CD4-positive, alpha-beta memory T cell (primary cell): ENCODE measurements at regions of chr11 and their contacts with region 1.

Region 1: DNA sequence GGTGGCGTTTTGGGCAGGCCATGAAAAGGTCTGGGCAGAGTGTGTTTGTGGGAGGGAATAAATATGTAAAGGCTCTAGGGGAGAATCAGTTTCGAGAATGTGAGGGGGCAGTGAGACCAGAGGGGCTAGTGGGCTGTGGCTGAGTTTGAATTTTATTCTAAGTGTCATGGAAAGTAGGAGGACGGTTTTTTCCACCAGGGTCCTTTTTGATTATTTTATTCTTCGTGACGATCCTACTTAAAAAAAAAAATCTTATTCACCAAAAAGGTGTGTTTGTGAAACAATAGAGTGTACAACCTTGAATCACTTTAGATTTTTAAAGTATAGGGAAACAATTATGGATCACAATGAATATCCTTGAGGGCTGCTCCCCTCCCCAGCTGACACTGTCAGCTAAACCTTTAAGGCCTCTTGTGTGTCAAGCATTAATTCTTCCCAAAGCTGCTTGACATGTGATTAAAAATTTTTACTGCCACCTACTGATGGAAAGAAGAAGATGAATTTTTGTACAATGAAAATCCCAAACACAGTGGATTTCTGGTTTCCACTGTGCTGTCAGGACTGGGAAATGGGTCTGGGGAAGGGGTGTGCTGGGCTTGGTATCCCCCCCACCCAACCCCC is 107.5 kb upstream of the OR4B1 start:
- DNase-seq: peak; percentile 33 to 47 (median 40)
- H3K4me3 ChIP-seq: peak overlapping the region in 1 of 2 donors; percentile 54
- H3K4me3 Mint-ChIP-seq: peak overlapping the region; percentile 52 to 90 (median 80)
- H3K27ac ChIP-seq: peak overlapping the region; percentile 64
- H3K27ac Mint-ChIP-seq: peak overlapping the region; percentile 70 to 95 (median 88)
- H3K4me1 ChIP-seq: peaks cover 50% of the 10 kb centered on the region
- H3K4me1 Mint-ChIP-seq: peaks cover 36 to 53% (median 45%) of the 10 kb centered on the region in 4 donors
- H3K27me3 ChIP-seq: no peaks in the 10 kb centered on the region
- H3K27me3 Mint-ChIP-seq: no peaks in the 10 kb centered on the region

Region 2: GRCh38 chr11:47924184-47924691 is 184.9 kb before region 1 on chr11:
- CTCF ChIA-PET with region 1: interaction called, 487 read pairs
- POLR2A ChIA-PET with region 1: no interaction called
- intact Hi-C with region 1: no loop called
- DNase-seq: no peak
- H3K4me3 ChIP-seq: no peak overlapping the region
- H3K4me3 Mint-ChIP-seq: peak overlapping the region in 2 of 8 donors; percentile 36 to 51
- H3K27ac ChIP-seq: no peak overlapping the region
- H3K27ac Mint-ChIP-seq: peak overlapping the region in 3 of 7 donors; percentile 68 to 85 (median 73)
- H3K4me1 ChIP-seq: peaks cover 29% of the 10 kb centered on the region
- H3K4me1 Mint-ChIP-seq: peaks cover 28 to 42% (median 37%) of the 10 kb centered on the region in 4 donors
- H3K27me3 ChIP-seq: no peaks in the 10 kb centered on the region
- H3K27me3 Mint-ChIP-seq: no peaks in the 10 kb centered on the region

Region 3: DNA sequence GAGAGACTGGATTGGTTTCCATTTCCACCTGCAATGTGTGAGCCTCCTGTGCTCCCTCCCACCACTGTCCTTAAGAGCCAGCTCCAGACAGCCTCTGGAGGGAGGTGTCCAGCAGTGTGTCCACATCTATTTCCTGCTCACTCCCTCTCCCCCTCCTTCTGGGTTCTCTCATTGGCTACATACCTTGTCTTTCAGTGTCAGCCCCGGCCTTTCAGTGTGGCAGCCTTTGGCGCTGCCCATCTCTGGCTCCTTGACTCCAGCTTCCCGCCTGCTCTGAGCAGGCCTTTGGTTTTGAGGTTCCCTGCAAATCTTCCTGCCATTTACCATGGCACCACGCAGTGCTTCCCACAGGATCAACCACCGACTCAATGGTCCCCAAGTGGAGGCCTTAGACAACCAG is 147.8 kb before region 1 on chr11:
- CTCF ChIA-PET with region 1: interaction called, 83 read pairs
- POLR2A ChIA-PET with region 1: interaction called, 5 read pairs
- intact Hi-C with region 1: loop called (anchors 1 kb)
- DNase-seq: no peak
- H3K4me3 ChIP-seq: no peak overlapping the region
- H3K4me3 Mint-ChIP-seq: no peak overlapping the region
- H3K27ac ChIP-seq: no peak overlapping the region
- H3K27ac Mint-ChIP-seq: no peak overlapping the region
- H3K4me1 ChIP-seq: no peaks in the 10 kb centered on the region
- H3K4me1 Mint-ChIP-seq: no peaks in the 10 kb centered on the region
- H3K27me3 ChIP-seq: no peaks in the 10 kb centered on the region
- H3K27me3 Mint-ChIP-seq: no peaks in the 10 kb centered on the region

Region 4: DNA sequence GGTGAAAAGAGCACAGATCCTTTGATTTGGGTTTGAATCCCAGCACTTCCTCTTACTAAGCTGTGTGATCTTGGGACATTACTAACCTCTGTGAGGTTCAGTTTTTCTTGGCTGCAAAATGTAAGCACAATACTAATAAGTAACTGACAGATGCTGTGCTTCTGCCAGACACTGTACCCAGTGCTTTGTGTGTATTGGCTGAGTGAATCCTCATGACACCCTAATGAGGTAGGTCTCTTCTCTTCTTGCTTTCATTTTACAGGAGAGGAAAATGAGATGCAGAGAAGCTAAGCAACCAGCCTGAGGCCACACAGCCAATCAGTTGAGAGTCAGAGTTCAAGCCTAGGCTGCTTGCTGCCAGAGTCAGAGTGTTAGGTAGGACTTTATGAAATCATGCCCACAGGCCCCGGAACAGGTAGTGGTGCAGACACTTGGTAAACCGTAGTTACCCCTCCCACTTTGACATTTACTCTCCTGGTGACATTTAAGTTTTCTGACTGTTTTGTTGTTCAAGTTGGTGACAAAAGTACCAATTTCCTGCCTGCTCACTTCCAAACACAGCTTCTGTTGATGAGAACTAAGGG is 107.6 kb before region 1 on chr11:
- CTCF ChIA-PET with region 1: interaction called, 29 read pairs
- POLR2A ChIA-PET with region 1: interaction called, 11 read pairs
- intact Hi-C with region 1: loop called (anchors 1 kb)
- DNase-seq: peak; percentile 90 to 97 (median 95)
- H3K4me3 ChIP-seq: peak overlapping the region in 1 of 2 donors; percentile 14
- H3K4me3 Mint-ChIP-seq: peak overlapping the region; percentile 66 to 93 (median 76)
- H3K27ac ChIP-seq: peak overlapping the region; percentile 65
- H3K27ac Mint-ChIP-seq: peak overlapping the region; percentile 90 to 99 (median 97)
- H3K4me1 ChIP-seq: peaks cover 95% of the 10 kb centered on the region
- H3K4me1 Mint-ChIP-seq: peaks cover 61 to 93% (median 80%) of the 10 kb centered on the region in 4 donors
- H3K27me3 ChIP-seq: no peaks in the 10 kb centered on the region
- H3K27me3 Mint-ChIP-seq: no peaks in the 10 kb centered on the region

Region 5: DNA sequence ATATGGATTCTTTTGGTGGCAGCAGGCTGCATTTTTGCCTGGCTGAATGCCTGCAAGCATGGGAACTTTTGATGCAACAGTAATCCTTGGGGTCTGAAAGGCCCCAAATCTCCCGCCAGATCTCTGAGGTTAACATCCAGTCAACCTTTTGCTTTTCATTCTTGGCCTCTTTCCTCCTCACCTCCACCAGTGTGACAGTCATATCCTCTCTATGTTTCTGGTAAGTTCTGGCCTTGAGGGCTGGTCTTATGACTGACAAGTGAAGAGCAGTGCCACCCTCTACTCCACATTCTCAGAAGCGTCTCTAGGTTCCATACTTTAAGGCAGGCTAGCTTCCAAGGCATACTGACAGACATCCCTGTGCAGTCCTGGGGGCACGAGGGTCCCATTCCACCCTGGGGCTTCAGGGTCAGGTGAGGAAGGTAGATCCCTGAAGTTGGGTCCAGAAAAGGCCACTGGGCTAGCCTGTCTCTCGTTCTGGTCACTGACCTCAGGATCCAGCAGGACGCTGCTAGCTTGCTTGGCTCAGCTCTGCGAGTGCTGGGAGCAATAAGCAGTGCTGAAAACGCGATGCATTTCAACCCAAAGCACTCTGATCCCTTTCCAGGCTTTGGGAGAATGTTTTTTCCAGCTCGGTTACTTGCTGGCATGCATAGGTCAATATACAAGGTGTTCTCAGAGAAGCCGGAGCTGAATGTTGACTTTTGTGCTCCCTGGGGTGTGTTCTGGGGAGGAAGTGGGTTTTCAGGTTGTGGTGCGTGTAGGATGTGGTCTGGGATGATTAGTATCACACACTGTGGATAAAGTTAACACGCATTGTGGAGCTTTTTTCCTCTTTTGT is 53.6 kb before region 1 on chr11:
- CTCF ChIA-PET with region 1: interaction called, 83 read pairs
- POLR2A ChIA-PET with region 1: interaction called, 44 read pairs
- intact Hi-C with region 1: loop called (anchors 2 kb)
- DNase-seq: peak; percentile 77 to 84 (median 81)
- H3K4me3 ChIP-seq: peak overlapping the region; percentile 33 to 40
- H3K4me3 Mint-ChIP-seq: peak overlapping the region; percentile 71 to 88 (median 83)
- H3K27ac ChIP-seq: peak overlapping the region; percentile 31
- H3K27ac Mint-ChIP-seq: peak overlapping the region; percentile 79 to 96 (median 91)
- H3K4me1 ChIP-seq: peaks cover 89% of the 10 kb centered on the region
- H3K4me1 Mint-ChIP-seq: peaks cover 60 to 93% (median 75%) of the 10 kb centered on the region in 4 donors
- H3K27me3 ChIP-seq: no peaks in the 10 kb centered on the region
- H3K27me3 Mint-ChIP-seq: no peaks in the 10 kb centered on the region

Region 6: GRCh38 chr11:48134221-48134922 is 25.2 kb after region 1 on chr11:
- CTCF ChIA-PET with region 1: no interaction called
- POLR2A ChIA-PET with region 1: no interaction called
- intact Hi-C with region 1: no loop called
- DNase-seq: no peak
- H3K4me3 ChIP-seq: no peak overlapping the region
- H3K4me3 Mint-ChIP-seq: no peak overlapping the region
- H3K27ac ChIP-seq: no peak overlapping the region
- H3K27ac Mint-ChIP-seq: peak overlapping the region in 2 of 7 donors; percentile 64 to 68
- H3K4me1 ChIP-seq: no peaks in the 10 kb centered on the region
- H3K4me1 Mint-ChIP-seq: peaks cover 0 to 5% (median 3%) of the 10 kb centered on the region in 4 donors
- H3K27me3 ChIP-seq: no peaks in the 10 kb centered on the region
- H3K27me3 Mint-ChIP-seq: no peaks in the 10 kb centered on the region